Activated T-helper 1 cell treated with anti-CD3 and anti-CD28 coated beads, Interleukin-12 subunit alpha, Interleukin-12 subunit beta, Interleukin-2, Interleukin-4 antibody, amounts not matched to agents 30 ng/mL and 10 ng/mL and 1 ng/mL, durations not matched to agents 14 hours and 24 hours and 36 hours (primary cell): ENCODE measurements at regions of chr2 and their contacts with region 1.

Region 1: GRCh38 chr2:203484266-203485112 is 50.6 kb downstream of the RAPH1 start:
- DNase-seq: peak; percentile 30
- H3K4me3 Mint-ChIP-seq: no peak overlapping the region
- H3K27ac Mint-ChIP-seq: no peak overlapping the region
- H3K4me1 Mint-ChIP-seq: peaks cover 6% of the 10 kb centered on the region
- H3K27me3 Mint-ChIP-seq: no peaks in the 10 kb centered on the region

Region 2: GRCh38 chr2:203650860-203651613 is 166.5 kb after region 1 on chr2:
- intact Hi-C with region 1: loop called (anchors 1 kb)
- DNase-seq: no peak
- H3K4me3 Mint-ChIP-seq: no peak overlapping the region
- H3K27ac Mint-ChIP-seq: no peak overlapping the region
- H3K4me1 Mint-ChIP-seq: peaks cover 36% of the 10 kb centered on the region
- H3K27me3 Mint-ChIP-seq: peaks cover 5% of the 10 kb centered on the region

Region 3: GRCh38 chr2:203782262-203782976 is 297.9 kb after region 1 on chr2:
- intact Hi-C with region 1: loop called (anchors 1 kb)
- DNase-seq: peak; percentile 50
- H3K4me3 Mint-ChIP-seq: no peak overlapping the region
- H3K27ac Mint-ChIP-seq: peak overlapping the region; percentile 92
- H3K4me1 Mint-ChIP-seq: peaks cover 63% of the 10 kb centered on the region
- H3K27me3 Mint-ChIP-seq: no peaks in the 10 kb centered on the region